Activated T-helper 1 cell treated with anti-CD3 and anti-CD28 coated beads, Interleukin-12 subunit alpha, Interleukin-12 subunit beta, Interleukin-2, Interleukin-4 antibody, amounts not matched to agents 30 ng/mL and 10 ng/mL and 1 ng/mL, durations not matched to agents 14 hours and 24 hours and 36 hours (primary cell): ENCODE measurements at regions of chr10 and their contacts with region 1.

Region 1: DNA sequence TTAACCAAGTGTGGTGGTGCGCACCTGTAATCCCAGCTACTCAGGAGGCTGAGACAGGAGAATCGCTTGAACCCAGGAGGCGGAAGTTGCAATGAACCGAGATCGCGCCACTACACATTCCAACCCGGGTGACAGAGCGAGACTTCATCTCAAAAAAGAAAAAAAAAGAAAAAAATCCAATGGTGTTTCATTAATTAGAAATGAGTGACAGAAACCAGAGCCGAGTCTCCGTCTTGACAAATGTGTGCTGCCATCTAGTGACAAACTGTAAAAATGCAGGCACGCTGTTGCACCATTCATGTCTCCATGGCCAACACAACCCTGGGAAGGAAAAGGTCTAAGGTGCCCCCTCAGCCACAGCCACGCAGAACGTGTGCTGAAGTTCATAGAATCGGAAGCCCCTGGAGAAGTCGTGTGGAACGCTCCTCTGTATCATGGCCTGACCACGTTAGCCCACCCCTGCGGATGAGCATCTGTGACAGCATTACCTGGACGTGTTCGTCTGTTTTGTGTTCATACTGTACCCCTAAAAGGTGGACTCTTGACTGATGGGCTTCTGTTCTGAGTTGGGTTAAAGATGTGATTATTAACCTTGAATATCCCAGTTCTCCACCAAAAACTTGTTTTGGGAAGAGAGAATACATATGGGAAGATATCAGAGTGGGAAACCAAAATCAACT is 94.9 kb downstream of the LYZL2 start:
- DNase-seq: peak; percentile 58
- H3K4me3 Mint-ChIP-seq: no peak overlapping the region
- H3K27ac Mint-ChIP-seq: peak overlapping the region; percentile 2
- H3K4me1 Mint-ChIP-seq: peaks cover 49% of the 10 kb centered on the region
- H3K27me3 Mint-ChIP-seq: no peaks in the 10 kb centered on the region

Region 2: DNA sequence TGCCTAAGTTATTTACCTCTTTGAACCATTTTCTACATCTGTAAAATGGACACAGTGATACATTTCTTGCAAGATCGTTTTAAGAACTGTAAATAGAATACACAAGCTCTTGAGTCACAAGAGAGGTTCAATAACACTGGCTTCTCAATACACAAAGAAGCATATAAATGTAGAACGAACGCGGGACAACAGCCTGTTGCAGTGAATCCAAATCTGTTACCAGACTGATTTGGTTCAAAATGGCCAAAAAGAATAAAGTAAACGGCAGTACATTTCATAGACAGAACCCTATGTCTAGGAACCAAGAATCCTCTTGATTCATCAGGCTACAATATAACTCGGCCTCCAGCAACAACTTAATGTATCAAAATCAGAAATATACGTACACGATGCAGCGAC is 186.2 kb before region 1 on chr10:
- intact Hi-C with region 1: loop called (anchors 5 kb)
- DNase-seq: no peak
- H3K4me3 Mint-ChIP-seq: peak overlapping the region; percentile 93
- H3K27ac Mint-ChIP-seq: peak overlapping the region; percentile 88
- H3K4me1 Mint-ChIP-seq: peaks cover 49% of the 10 kb centered on the region
- H3K27me3 Mint-ChIP-seq: no peaks in the 10 kb centered on the region

Region 3: GRCh38 chr10:30392564-30392990 is 142.0 kb before region 1 on chr10:
- intact Hi-C with region 1: loop called (anchors 1 kb)
- DNase-seq: peak; percentile 67
- H3K4me3 Mint-ChIP-seq: no peak overlapping the region
- H3K27ac Mint-ChIP-seq: no peak overlapping the region
- H3K4me1 Mint-ChIP-seq: peaks cover 15% of the 10 kb centered on the region
- H3K27me3 Mint-ChIP-seq: peaks cover 14% of the 10 kb centered on the region

Region 4: DNA sequence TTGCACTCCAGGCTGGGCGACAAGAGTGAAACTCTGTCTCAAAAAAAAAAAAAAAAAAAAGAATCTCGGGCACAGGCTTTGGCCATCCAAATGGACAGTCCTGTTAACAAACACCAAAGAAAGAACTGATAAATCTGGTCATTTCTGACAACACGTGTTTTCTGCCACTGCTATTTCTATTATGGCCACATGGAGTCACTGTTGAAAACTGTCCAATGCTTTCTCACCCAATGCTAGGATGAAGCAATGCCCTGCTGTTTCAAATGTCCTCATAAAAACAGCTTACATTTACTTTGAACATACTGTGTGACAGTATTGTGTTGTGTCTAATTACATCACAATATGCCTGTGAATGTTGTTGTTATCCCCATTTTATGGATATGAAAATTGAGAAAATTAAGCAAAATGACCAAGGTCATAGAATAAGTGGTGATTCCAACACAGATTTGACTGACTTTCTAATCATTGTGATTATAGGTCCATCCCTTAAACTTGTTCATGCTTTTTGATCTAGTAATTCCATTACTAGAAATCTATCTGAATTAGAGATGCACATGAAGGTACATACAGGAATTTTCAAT is 120.5 kb before region 1 on chr10:
- intact Hi-C with region 1: loop called (anchors 1 kb)
- DNase-seq: no peak
- H3K4me3 Mint-ChIP-seq: no peak overlapping the region
- H3K27ac Mint-ChIP-seq: no peak overlapping the region
- H3K4me1 Mint-ChIP-seq: peaks cover 34% of the 10 kb centered on the region
- H3K27me3 Mint-ChIP-seq: no peaks in the 10 kb centered on the region

Region 5: GRCh38 chr10:30606313-30606712 is 71.7 kb after region 1 on chr10:
- intact Hi-C with region 1: no loop called
- DNase-seq: no peak
- H3K4me3 Mint-ChIP-seq: no peak overlapping the region
- H3K27ac Mint-ChIP-seq: no peak overlapping the region
- H3K4me1 Mint-ChIP-seq: no peaks in the 10 kb centered on the region
- H3K27me3 Mint-ChIP-seq: peaks cover 22% of the 10 kb centered on the region